ENCODE measurements at regions of chr17 and their contacts with region 1.

Region 1: GRCh38 chr17:50139950-50140871 is 10.3 kb upstream of the SAMD14 start:
- DNase-seq: peak; percentile 87
- ATAC-seq: peak; percentile 75
- H3K4me3 Mint-ChIP-seq: peak overlapping the region; percentile 70
- H3K27ac Mint-ChIP-seq: peak overlapping the region; percentile 89
- H3K4me1 Mint-ChIP-seq: peaks cover 55% of the 10 kb centered on the region
- H3K27me3 Mint-ChIP-seq: no peaks in the 10 kb centered on the region

Region 2: GRCh38 chr17:50151041-50151936 is 11.1 kb after region 1 on chr17:
- POLR2A ChIA-PET with region 1: interaction called, 27 read pairs
- DNase-seq: peak; percentile 90
- ATAC-seq: peak; percentile 74
- H3K4me3 Mint-ChIP-seq: peak overlapping the region; percentile 93
- H3K27ac Mint-ChIP-seq: peak overlapping the region; percentile 97
- H3K4me1 Mint-ChIP-seq: peaks cover 36% of the 10 kb centered on the region
- H3K27me3 Mint-ChIP-seq: no peaks in the 10 kb centered on the region

Region 3: DNA sequence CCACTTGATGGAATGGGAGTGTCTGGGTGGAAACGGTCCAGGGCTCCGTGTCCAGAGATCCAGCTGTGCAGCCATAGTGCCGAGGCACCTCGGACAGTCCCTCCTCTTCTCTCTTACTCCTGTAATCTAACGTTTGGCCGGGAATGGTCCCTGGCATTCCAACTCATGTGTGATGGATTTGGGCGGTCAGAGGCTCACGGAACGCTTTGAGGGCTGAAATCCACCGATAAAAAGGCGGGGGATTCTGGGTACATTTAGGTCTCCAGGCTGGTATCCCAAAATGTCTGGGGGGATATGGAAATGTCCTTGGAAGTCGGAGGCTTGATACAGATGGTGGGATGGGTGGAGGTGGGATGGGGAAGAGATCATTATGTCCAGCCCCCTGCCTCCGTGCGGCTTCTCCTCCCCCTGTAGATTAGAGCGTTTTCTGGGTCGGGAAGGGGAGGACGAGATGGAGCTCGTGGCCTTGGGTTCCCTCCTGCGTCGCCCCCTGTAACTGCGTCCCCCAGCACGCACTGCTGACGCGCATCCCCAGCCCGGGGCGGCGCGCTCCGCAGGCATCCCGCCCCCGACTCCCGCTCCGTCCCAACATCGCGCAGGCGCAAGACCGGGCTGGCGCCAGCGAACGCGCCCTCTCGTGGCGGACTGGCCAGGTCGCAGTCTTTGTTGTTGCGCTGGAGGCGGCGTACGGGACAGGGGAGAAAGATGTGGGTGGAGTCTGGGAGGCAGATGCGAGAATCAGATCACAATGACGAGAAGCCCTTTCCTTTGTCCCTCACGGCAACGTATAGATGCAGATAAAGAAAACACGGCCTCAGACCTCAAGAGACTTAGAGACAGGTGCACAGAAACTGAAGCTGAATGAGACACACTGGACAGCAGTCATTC is 21.1 kb after region 1 on chr17:
- POLR2A ChIA-PET with region 1: interaction called, 20 read pairs
- DNase-seq: peak; percentile 99
- ATAC-seq: peak; percentile 95
- H3K4me3 Mint-ChIP-seq: peak overlapping the region; percentile 67
- H3K27ac Mint-ChIP-seq: peak overlapping the region; percentile 91
- H3K4me1 Mint-ChIP-seq: peaks cover 34% of the 10 kb centered on the region
- H3K27me3 Mint-ChIP-seq: peaks cover 11% of the 10 kb centered on the region

Region 4: GRCh38 chr17:50200457-50201275 is 60.5 kb after region 1 on chr17:
- POLR2A ChIA-PET with region 1: no interaction called
- DNase-seq: peak; percentile 88
- ATAC-seq: peak; percentile 78
- H3K4me3 Mint-ChIP-seq: peak overlapping the region; percentile 81
- H3K27ac Mint-ChIP-seq: peak overlapping the region; percentile 54
- H3K4me1 Mint-ChIP-seq: peaks cover 14% of the 10 kb centered on the region
- H3K27me3 Mint-ChIP-seq: peaks cover 56% of the 10 kb centered on the region